Cardiac septum (tissue), 1 donor: ENCODE measurements at regions of chr3 and their contacts with region 1.

Region 1: GRCh38 chr3:172138795-172139441 is 99.5 kb downstream of the FNDC3B start:
- DNase-seq: peak; percentile 86

Region 2: DNA sequence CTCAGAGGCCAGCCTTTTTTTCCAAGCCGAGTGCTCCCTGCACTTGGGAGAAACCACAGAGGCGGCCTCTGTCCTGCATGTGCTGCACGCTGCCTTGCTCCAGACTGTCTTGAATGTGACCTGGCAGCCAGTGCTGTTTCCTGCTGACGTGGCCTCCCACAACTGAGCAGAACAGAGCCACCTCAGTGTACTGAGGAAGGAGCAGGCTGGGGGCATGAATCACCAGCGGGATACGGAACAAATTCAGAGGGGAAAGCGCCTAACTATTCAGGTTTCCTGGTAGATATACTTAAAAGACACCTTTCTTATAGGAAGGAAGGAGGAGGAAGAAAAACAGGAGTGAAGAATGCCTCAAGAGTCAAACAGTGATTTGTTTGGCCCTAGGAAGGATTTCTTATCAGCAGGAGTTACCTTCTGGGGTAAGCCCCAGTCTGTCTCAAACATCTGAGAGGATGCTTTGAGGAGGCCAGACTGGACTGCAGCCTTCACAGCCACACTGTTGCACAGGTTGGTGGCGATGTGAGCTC is 14.5 kb after region 1 on chr3:
- intact Hi-C with region 1: loop called (anchors 1 kb)
- DNase-seq: peak; percentile 96

Region 3: DNA sequence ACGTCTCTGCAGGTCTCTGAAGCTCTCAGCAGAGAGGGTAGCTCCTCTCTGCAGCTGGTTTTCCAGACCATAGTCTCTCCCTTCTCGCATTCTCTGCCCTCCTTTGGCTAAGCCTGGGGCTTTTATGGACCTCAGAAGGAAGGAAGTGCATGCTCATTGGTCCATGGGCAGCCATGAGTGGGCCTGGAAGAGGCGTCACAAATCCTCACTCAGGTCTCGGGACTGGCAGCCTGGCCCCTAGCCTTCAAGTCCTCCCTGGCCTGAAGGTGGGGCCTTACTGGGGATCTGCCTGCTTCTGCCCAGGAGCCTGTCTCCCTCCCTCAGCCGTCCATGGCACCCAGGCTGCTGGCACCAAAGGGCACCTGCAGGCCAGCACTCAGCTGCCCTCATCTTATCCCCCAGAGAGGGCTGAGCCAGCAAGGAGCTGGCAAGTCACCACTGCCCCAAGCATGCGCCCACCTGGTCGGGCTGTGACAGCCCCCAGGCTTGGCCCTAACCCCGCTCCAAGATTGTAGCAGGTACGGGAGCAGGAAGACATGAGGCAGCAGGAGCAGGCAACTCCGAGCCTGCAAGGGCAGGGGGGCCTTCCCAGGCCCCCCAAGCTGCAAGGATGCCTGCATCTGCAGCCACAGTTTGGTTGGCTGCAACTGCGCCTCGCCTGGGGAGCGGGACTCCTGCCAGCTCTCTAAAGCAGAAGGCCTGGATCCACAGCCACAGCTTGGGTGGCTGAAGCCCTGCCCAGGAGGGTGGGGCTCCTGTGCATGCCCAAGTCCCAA is 272.0 kb after region 1 on chr3:
- intact Hi-C with region 1: no loop called
- DNase-seq: no peak